WTC11 (cell line): ENCODE measurements at regions of chr18 and their contacts with region 1.

Region 1: DNA sequence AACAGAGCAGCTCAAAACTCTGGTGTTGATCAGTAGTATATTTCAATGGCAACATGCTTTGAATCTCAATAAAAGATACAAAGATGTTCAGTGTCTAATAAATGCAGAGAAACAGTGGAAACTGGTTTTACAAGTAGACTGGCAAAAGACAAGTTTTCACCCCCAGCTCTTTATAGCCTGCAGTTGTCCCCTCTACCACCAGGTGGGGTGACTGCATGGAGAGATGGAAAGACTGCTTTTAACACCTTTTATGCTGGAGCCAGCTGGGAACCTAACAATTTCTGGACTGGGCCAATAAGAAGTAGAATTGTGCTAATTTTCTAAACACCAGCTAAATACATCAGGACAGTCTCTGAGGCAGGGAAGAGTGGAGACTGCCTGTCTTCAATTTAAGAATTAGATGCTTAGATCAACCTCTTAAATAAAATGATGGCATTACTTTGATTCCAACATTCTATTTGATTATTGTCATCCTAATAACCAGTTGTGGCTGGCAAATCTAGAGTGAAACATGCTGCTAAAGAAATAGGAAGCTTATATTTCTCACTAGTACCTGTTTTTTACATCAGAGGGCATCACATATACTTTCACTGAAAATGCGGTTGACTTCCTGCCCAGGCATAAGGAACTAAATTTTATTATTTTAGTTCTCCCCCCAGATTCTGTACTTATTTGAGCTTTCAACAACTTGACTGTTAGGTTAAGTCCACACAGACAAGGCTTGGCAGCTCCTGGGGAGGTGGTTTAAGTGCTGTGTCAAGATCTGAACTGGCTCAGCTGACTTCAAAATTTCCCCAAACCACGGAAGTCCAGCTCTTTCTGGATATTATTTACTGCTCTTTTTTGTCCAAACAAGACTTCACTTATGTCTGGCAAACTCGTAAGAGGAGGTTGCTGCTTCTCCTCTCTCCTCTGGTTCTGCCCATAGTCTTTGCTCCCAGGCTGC is 140.5 kb downstream of the TPGS2 start:
- DNase-seq: peak; percentile 80
- ATAC-seq: peak; percentile 65
- H3K4me3 Mint-ChIP-seq: no peak overlapping the region
- H3K27ac Mint-ChIP-seq: no peak overlapping the region
- H3K4me1 Mint-ChIP-seq: no peaks in the 10 kb centered on the region
- H3K27me3 Mint-ChIP-seq: no peaks in the 10 kb centered on the region; the same call in 1 of the 2 replicates
- CTCF ChIP-seq: peak; percentile 74

Region 2: GRCh38 chr18:36601316-36601715 is 87.0 kb before region 1 on chr18:
- CTCF ChIA-PET with region 1: no interaction called
- POLR2A ChIA-PET with region 1: no interaction called
- DNase-seq: no peak
- ATAC-seq: no peak
- H3K4me3 Mint-ChIP-seq: no peak overlapping the region
- H3K27ac Mint-ChIP-seq: no peak overlapping the region
- H3K4me1 Mint-ChIP-seq: peaks cover 14% of the 10 kb centered on the region
- H3K27me3 Mint-ChIP-seq: no peaks in the 10 kb centered on the region; the same call in none of the 2 replicates
- CTCF ChIP-seq: no peak

Region 3: GRCh38 chr18:36711813-36712444 is 23.6 kb after region 1 on chr18:
- CTCF ChIA-PET with region 1: interaction called, 10 read pairs
- POLR2A ChIA-PET with region 1: no interaction called
- DNase-seq: no peak
- ATAC-seq: no peak
- H3K4me3 Mint-ChIP-seq: no peak overlapping the region
- H3K27ac Mint-ChIP-seq: no peak overlapping the region
- H3K4me1 Mint-ChIP-seq: no peaks in the 10 kb centered on the region
- H3K27me3 Mint-ChIP-seq: no peaks in the 10 kb centered on the region
- CTCF ChIP-seq: no peak

Region 4: GRCh38 chr18:36724591-36725001 is 36.3 kb after region 1 on chr18:
- CTCF ChIA-PET with region 1: interaction called, 10 read pairs
- POLR2A ChIA-PET with region 1: no interaction called
- DNase-seq: no peak
- ATAC-seq: no peak
- H3K4me3 Mint-ChIP-seq: no peak overlapping the region
- H3K27ac Mint-ChIP-seq: no peak overlapping the region
- H3K4me1 Mint-ChIP-seq: peaks cover 15% of the 10 kb centered on the region
- H3K27me3 Mint-ChIP-seq: no peaks in the 10 kb centered on the region; the same call in 1 of the 2 replicates
- CTCF ChIP-seq: no peak

Region 5: DNA sequence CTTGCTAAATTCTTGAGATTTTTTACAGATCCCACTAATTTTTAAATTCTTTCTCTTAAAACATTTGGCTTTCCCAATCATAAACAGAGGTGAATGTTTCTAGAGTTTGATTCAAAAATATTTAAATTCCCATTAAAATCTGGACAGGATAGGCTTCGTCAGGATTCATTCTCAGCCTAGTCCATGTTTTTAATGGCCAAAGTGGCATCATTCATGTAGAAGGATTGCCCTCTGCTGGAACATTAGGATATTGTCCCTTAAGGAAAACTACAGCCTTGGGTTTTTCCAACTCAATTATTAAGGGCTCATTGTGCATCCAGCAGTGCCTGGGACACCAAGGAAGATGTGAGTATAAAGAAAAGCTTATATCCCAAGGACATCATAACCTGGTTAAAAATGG is 68.8 kb after region 1 on chr18:
- CTCF ChIA-PET with region 1: interaction called, 24 read pairs
- POLR2A ChIA-PET with region 1: no interaction called
- DNase-seq: no peak
- ATAC-seq: peak; percentile 78
- H3K4me3 Mint-ChIP-seq: no peak overlapping the region
- H3K27ac Mint-ChIP-seq: no peak overlapping the region
- H3K4me1 Mint-ChIP-seq: peaks cover 8% of the 10 kb centered on the region
- H3K27me3 Mint-ChIP-seq: no peaks in the 10 kb centered on the region
- CTCF ChIP-seq: peak; percentile 57; the same call in 1 of the 2 replicates

Region 6: GRCh38 chr18:36772241-36772723 is 84.0 kb after region 1 on chr18:
- CTCF ChIA-PET with region 1: no interaction called
- POLR2A ChIA-PET with region 1: no interaction called
- DNase-seq: no peak
- ATAC-seq: no peak
- H3K4me3 Mint-ChIP-seq: no peak overlapping the region
- H3K27ac Mint-ChIP-seq: no peak overlapping the region
- H3K4me1 Mint-ChIP-seq: peaks cover 9% of the 10 kb centered on the region
- H3K27me3 Mint-ChIP-seq: no peaks in the 10 kb centered on the region
- CTCF ChIP-seq: no peak

Region 7: GRCh38 chr18:36839835-36840234 is 151.5 kb after region 1 on chr18:
- CTCF ChIA-PET with region 1: no interaction called
- POLR2A ChIA-PET with region 1: no interaction called
- DNase-seq: no peak
- ATAC-seq: no peak
- H3K4me3 Mint-ChIP-seq: no peak overlapping the region
- H3K27ac Mint-ChIP-seq: no peak overlapping the region
- H3K4me1 Mint-ChIP-seq: peaks cover 17% of the 10 kb centered on the region
- H3K27me3 Mint-ChIP-seq: no peaks in the 10 kb centered on the region
- CTCF ChIP-seq: no peak

Region 8: GRCh38 chr18:36872329-36872728 is 184.0 kb after region 1 on chr18:
- CTCF ChIA-PET with region 1: no interaction called
- POLR2A ChIA-PET with region 1: no interaction called
- DNase-seq: no peak
- ATAC-seq: no peak; the same call in 1 of the 2 replicates
- H3K4me3 Mint-ChIP-seq: no peak overlapping the region
- H3K27ac Mint-ChIP-seq: no peak overlapping the region
- H3K4me1 Mint-ChIP-seq: peaks cover 13% of the 10 kb centered on the region
- H3K27me3 Mint-ChIP-seq: no peaks in the 10 kb centered on the region
- CTCF ChIP-seq: no peak